K562 (cell line): ENCODE measurements at regions of chr3 and their contacts with region 1.

Region 1: GRCh38 chr3:106119614-106120082 is 250.8 kb upstream of the CBLB start:
- DNase-seq: no peak
- ATAC-seq: no peak
- H3K4me3 ChIP-seq: no peak overlapping the region
- H3K27ac ChIP-seq: no peak overlapping the region
- H3K4me1 ChIP-seq: peaks cover 5 to 9% of the 10 kb centered on the region in 2 experiments; a peak in 3 of 5 replicates
- H3K27me3 ChIP-seq: no peaks in the 10 kb centered on the region
- CTCF ChIP-seq: no peak
- EP300 ChIP-seq: no peak
- POLR2A ChIP-seq: no peak
- RAD21 ChIP-seq: no peak

Region 2: DNA sequence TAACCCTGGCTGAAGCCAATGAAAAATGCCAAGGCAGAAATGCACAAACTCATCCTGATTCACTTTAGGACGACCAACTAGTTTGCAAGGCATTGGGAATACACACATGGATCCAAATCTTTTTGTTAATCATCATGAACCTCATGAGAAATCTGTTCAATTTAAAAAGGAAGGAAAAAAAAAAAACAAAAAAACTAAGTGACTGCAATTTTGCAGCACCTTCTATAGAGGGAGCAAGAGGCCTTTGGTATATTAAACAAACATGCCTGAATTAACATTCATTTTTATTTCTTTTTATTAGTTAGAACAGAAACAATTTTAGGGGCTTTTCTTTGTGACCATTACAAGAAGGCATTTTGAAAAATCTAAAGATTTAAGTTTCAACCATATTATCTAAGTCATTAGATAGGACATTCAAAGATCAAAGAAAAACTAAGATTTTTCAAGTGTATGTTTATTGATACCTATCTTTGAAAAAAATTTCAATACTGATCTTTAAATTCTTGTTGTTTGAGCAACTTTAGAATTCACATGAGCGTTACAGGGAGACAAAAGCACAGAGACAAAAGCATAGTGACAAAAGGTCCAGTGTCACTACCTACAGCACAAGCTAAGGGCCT is 433.3 kb before region 1 on chr3:
- CTCF ChIA-PET with region 1: interaction called, 4 read pairs
- POLR2A ChIA-PET with region 1: no interaction called
- in situ Hi-C with region 1: no loop called
- intact Hi-C with region 1: loop called (anchors 5 kb)
- DNase-seq: peak; percentile 1 to 12 (median 4)
- ATAC-seq: no peak
- H3K4me3 ChIP-seq: no peak overlapping the region
- H3K27ac ChIP-seq: no peak overlapping the region
- H3K4me1 ChIP-seq: no peaks in the 10 kb centered on the region
- H3K27me3 ChIP-seq: no peaks in the 10 kb centered on the region
- CTCF ChIP-seq: peak in 2 of 3 experiments; percentile 8 to 72; a peak in 3 of 6 replicates
- EP300 ChIP-seq: no peak
- POLR2A ChIP-seq: no peak
- RAD21 ChIP-seq: peak; percentile 45 to 64

Region 3: GRCh38 chr3:106004137-106004681 is 115.4 kb before region 1 on chr3:
- CTCF ChIA-PET with region 1: no interaction called
- POLR2A ChIA-PET with region 1: no interaction called
- in situ Hi-C with region 1: no loop called
- intact Hi-C with region 1: loop called (anchors 10 kb)
- DNase-seq: peak; percentile 13 to 62 (median 25)
- ATAC-seq: peak; percentile 82
- H3K4me3 ChIP-seq: no peak overlapping the region
- H3K27ac ChIP-seq: peak overlapping the region; percentile 42; the same call in 1 of the 3 replicates
- H3K4me1 ChIP-seq: peaks cover 0 to 17% of the 10 kb centered on the region in 2 experiments; a peak in 3 of 5 replicates
- H3K27me3 ChIP-seq: no peaks in the 10 kb centered on the region
- CTCF ChIP-seq: no peak
- EP300 ChIP-seq: peak; percentile 59; the same call in 1 of the 2 replicates
- POLR2A ChIP-seq: no peak
- RAD21 ChIP-seq: no peak

Region 4: DNA sequence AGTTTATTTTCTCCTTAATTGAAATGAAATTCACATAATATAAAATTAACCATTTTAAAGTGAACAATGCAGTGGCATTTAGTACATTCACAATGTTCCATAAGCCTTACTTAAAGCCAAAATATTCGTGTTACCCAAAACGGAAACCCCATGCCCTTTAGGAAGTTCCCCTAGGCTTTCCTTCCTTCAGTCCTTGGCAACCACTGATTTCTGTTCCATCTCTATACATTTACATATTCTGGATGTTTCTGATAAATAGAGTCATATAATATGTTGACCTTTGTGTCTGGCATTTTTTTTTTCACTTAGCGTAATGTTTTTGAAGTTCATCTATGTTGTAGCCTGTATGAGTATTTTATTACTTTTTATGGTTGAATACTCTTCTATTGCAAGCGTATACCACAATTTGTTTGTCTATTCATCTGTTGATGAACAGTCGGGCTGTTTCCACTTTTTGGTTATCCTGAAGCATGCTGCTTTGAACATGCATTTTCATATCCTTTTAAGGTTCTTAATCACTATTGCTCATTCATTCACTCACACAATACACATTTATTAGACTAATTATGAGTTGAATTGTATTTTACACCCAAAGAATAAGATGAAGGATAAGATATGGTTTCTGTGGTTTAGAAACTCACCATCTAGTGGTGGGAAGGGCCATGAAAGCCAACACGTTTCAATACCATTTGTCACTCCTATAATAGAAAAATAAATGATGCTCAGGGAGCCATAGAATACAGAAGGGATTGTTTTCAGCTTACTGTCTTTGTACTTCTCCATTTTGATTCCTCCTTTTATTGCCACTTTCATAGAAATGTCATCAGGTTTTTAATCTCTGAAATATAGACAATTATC is 157.3 kb after region 1 on chr3:
- CTCF ChIA-PET with region 1: no interaction called
- POLR2A ChIA-PET with region 1: no interaction called
- in situ Hi-C with region 1: no loop called
- intact Hi-C with region 1: no loop called
- DNase-seq: no peak
- ATAC-seq: no peak
- H3K4me3 ChIP-seq: no peak overlapping the region
- H3K27ac ChIP-seq: no peak overlapping the region
- H3K4me1 ChIP-seq: no peaks in the 10 kb centered on the region
- H3K27me3 ChIP-seq: no peaks in the 10 kb centered on the region
- CTCF ChIP-seq: no peak
- EP300 ChIP-seq: no peak
- POLR2A ChIP-seq: no peak
- RAD21 ChIP-seq: no peak

Region 5: GRCh38 chr3:106345353-106346027 is 225.8 kb after region 1 on chr3:
- CTCF ChIA-PET with region 1: no interaction called
- POLR2A ChIA-PET with region 1: no interaction called
- in situ Hi-C with region 1: no loop called
- intact Hi-C with region 1: no loop called
- DNase-seq: no peak
- ATAC-seq: no peak
- H3K4me3 ChIP-seq: no peak overlapping the region
- H3K27ac ChIP-seq: no peak overlapping the region
- H3K4me1 ChIP-seq: no peaks in the 10 kb centered on the region
- H3K27me3 ChIP-seq: no peaks in the 10 kb centered on the region
- CTCF ChIP-seq: no peak
- EP300 ChIP-seq: no peak
- POLR2A ChIP-seq: no peak
- RAD21 ChIP-seq: no peak; a peak in 1 of 4 replicates